Sigmoid colon (tissue), 7 donors: ENCODE measurements at regions of chr17 and their contacts with region 1.

Region 1: GRCh38 chr17:1724506-1725362 is at the start of gene WDR81:
- DNase-seq: peak; percentile 96
- H3K4me3 ChIP-seq: peak within 1 kb of the TSS; percentile 50 to 87 (median 77)
- H3K27ac ChIP-seq: peak within 1 kb of the TSS; percentile 83 to 95 (median 90)
- H3K4me1 ChIP-seq: peaks cover 0 to 61% (median 41%) of the 10 kb centered on the region in 4 donors
- H3K27me3 ChIP-seq: no peaks in the 10 kb centered on the region
- CTCF ChIP-seq: no peak
- EP300 ChIP-seq: peak in 1 of 4 donors; percentile 52
- POLR2A ChIP-seq: no peak
- total RNA-seq, gene WDR81: 21.8 to 49.3 (median 28.2) TPM

Region 2: GRCh38 chr17:1673041-1673785 is 51.5 kb before region 1 on chr17:
- intact Hi-C with region 1: no loop called
- DNase-seq: peak; percentile 67
- H3K4me3 ChIP-seq: no peak overlapping the region
- H3K27ac ChIP-seq: no peak overlapping the region
- H3K4me1 ChIP-seq: peaks cover 0 to 19% (median 14%) of the 10 kb centered on the region in 4 donors
- H3K27me3 ChIP-seq: no peaks in the 10 kb centered on the region
- CTCF ChIP-seq: no peak
- EP300 ChIP-seq: no peak
- POLR2A ChIP-seq: no peak

Region 3: GRCh38 chr17:1703063-1703462 is 21.7 kb before region 1 on chr17:
- intact Hi-C with region 1: no loop called
- DNase-seq: no peak
- H3K4me3 ChIP-seq: no peak overlapping the region
- H3K27ac ChIP-seq: no peak overlapping the region
- H3K4me1 ChIP-seq: no peaks in the 10 kb centered on the region
- H3K27me3 ChIP-seq: no peaks in the 10 kb centered on the region
- CTCF ChIP-seq: no peak
- EP300 ChIP-seq: no peak
- POLR2A ChIP-seq: no peak

Region 4: GRCh38 chr17:1776328-1776727 is 51.6 kb after region 1 on chr17:
- intact Hi-C with region 1: no loop called
- DNase-seq: no peak
- H3K4me3 ChIP-seq: no peak overlapping the region
- H3K27ac ChIP-seq: no peak overlapping the region
- H3K4me1 ChIP-seq: peaks cover 0 to 46% (median 33%) of the 10 kb centered on the region in 4 donors
- H3K27me3 ChIP-seq: no peaks in the 10 kb centered on the region
- CTCF ChIP-seq: no peak
- EP300 ChIP-seq: no peak
- POLR2A ChIP-seq: no peak

Region 5: DNA sequence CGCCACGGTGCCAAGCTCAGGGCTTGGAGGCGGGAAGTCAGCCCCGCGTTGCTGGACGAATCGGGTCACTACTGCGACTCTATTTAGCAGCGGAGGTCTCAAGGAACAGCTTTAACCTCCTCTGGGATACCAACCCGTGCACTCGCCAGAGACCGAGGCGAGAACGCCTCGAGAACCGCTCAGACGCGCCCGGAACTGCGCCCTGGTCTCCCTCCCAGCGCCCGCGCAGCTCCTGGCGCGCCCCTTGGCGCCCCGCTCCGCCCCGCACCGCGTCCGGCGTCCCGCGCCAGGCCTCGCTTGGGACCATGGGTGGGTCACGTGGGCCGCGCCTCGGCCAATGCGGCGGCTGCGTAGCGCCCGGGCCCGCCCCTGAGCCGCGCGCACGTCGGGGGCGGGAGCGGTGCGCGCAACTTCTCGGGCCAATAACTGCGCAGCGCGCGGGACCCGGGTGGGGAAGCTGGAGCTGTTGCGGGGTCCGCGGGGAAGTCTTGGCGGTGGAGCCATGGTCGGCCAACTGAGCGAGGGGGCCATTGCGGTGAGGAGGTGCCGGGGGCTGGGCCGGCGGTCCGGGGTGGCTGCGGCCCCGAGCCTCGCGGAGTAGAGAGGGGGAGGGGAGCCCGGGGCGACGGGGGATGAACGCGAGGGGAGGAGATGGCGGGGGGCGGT is 105.0 kb after region 1 on chr17 and contains the starts of genes RPA1 and SMYD4:
- intact Hi-C with region 1: loop called (anchors 1 kb)
- DNase-seq: peak; percentile 94
- H3K4me3 ChIP-seq: peak within 1 kb of the TSS; percentile 68 to 97 (median 88)
- H3K27ac ChIP-seq: peak within 1 kb of the TSS; percentile 87 to 93 (median 91)
- H3K4me1 ChIP-seq: peaks cover 0 to 30% (median 20%) of the 10 kb centered on the region in 4 donors
- H3K27me3 ChIP-seq: no peaks in the 10 kb centered on the region
- CTCF ChIP-seq: no peak
- EP300 ChIP-seq: no peak
- POLR2A ChIP-seq: peak in 1 of 2 donors; percentile 32
- total RNA-seq, gene RPA1: 27.8 to 46.8 (median 31.1) TPM
- total RNA-seq, gene SMYD4: 14.3 to 19.1 (median 17.1) TPM

Region 6: DNA sequence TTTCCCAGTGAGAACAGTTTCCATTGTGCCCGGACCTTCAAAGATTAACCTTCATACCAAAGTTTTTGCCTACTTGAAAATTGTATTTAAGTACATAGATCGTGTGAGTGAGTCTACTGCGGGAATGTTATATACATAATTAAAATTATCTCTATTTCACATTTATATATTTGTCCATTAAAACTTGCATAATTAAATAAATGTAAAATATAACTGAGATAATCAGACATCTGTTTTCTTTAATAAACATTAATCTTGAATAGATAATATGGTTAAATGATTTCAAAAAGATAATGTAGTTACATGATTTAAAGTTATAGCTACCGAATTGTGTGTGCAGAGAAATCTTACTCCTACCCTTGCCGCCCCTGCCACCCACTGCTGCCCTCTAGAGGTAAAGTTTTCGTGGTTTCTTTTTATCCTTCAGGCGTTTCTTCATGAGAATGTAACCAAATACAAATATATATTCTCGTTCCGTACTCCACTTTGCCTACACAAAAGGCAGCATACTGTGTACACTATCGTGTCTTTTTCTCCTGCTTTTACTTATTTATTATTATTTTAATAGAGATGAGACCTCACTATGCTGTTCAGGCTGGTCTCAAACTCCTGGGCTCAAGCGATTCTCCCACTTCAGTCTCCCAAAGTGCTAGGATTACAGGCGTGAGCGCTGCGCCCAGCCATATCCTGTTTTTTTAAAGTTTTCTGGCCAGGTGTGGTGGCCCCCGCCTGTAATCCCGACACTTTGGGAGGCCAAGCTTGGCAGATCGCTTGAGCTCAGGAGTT is 140.7 kb after region 1 on chr17:
- intact Hi-C with region 1: loop called (anchors 2 kb)
- DNase-seq: no peak
- H3K4me3 ChIP-seq: no peak overlapping the region
- H3K27ac ChIP-seq: no peak overlapping the region
- H3K4me1 ChIP-seq: no peaks in the 10 kb centered on the region
- H3K27me3 ChIP-seq: no peaks in the 10 kb centered on the region
- CTCF ChIP-seq: peak in 3 of 4 experiments; percentile 37 to 54 (median 41)
- EP300 ChIP-seq: no peak
- POLR2A ChIP-seq: no peak

Region 7: DNA sequence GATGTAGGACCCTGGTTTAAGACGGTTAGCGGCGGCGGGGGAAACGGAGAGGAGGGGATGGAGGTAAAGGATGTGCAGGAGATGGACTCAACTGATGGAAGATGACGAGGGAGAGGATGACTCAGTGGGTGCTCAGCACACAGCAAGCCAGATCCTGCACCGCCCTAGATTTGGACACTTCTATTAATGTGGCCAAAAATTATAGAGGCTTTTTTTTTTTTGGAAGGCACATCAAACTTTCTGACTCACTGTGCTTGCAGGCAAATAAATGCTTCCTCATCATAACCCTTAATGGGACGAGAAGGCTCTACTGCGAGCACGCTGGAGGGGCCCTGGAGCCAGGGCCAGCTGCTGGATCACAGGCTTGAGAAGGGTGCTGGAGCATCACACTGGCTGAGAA is 264.4 kb after region 1 on chr17:
- intact Hi-C with region 1: no loop called
- DNase-seq: peak; percentile 80
- H3K4me3 ChIP-seq: no peak overlapping the region
- H3K27ac ChIP-seq: no peak overlapping the region
- H3K4me1 ChIP-seq: no peaks in the 10 kb centered on the region
- H3K27me3 ChIP-seq: no peaks in the 10 kb centered on the region
- CTCF ChIP-seq: no peak
- EP300 ChIP-seq: no peak
- POLR2A ChIP-seq: no peak